Heart left ventricle (tissue), 16 donors: ENCODE measurements at regions of chr14 and their contacts with region 1.

Region 1: GRCh38 chr14:103198131-103199105 is 75.2 kb downstream of the TNFAIP2 start:
- DNase-seq: no peak
- ATAC-seq: peak; percentile 24 to 80 (median 73)
- H3K4me3 ChIP-seq: no peak overlapping the region
- H3K27ac ChIP-seq: peak overlapping the region in 7 of 12 donors; percentile 24 to 63 (median 50)
- H3K4me1 ChIP-seq: peaks cover 0 to 8% (median 0%) of the 10 kb centered on the region in 12 donors
- H3K27me3 ChIP-seq: peaks cover 0 to 7% (median 0%) of the 10 kb centered on the region in 9 donors
- CTCF ChIP-seq: no peak
- POLR2A ChIP-seq: no peak

Region 2: DNA sequence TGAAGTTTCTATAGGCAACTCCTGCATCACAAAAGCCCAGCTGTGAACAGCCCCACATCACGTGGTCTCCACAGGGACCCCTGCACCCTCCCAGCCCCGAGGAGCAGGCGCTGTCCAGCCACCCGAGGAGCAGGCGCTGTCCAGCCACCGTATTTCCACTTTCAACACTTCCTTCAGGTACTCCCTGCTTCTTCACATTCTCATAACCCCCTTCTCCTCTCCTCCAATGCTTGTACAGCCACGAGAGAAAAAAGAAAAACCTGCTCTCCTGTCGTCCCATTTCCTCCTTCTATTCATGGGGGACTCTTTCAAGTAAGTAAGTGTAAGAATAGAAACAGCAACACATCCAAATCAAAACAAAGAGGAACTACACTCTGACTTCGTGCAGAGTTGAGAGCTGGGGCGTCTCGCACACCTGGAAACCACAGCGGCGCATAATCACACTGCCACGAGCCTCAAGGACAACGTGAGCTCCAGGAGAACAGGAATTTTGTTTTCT is 153.0 kb before region 1 on chr14:
- intact Hi-C with region 1: no loop called
- DNase-seq: no peak
- ATAC-seq: peak in 3 of 4 donors; percentile 16 to 41 (median 25)
- H3K4me3 ChIP-seq: no peak overlapping the region
- H3K27ac ChIP-seq: no peak overlapping the region
- H3K4me1 ChIP-seq: peaks cover 0 to 48% (median 30%) of the 10 kb centered on the region in 12 donors
- H3K27me3 ChIP-seq: no peaks in the 10 kb centered on the region
- CTCF ChIP-seq: no peak
- POLR2A ChIP-seq: no peak

Region 3: GRCh38 chr14:103281496-103282231 is 83.2 kb after region 1 on chr14:
- intact Hi-C with region 1: loop called in 1 of 10 experiments (anchors 10 kb)
- DNase-seq: peak in 1 of 5 donors; percentile 58
- ATAC-seq: peak; percentile 60 to 88 (median 80)
- H3K4me3 ChIP-seq: no peak overlapping the region
- H3K27ac ChIP-seq: no peak overlapping the region
- H3K4me1 ChIP-seq: peaks cover 0 to 13% (median 4%) of the 10 kb centered on the region in 12 donors
- H3K27me3 ChIP-seq: peaks cover 16 to 60% (median 37%) of the 10 kb centered on the region in 9 donors
- CTCF ChIP-seq: peak in 10 of 12 donors; percentile 9 to 40 (median 22)
- POLR2A ChIP-seq: no peak